Ovary (tissue), 10 donors: ENCODE measurements at regions of chr4 and their contacts with region 1.

Region 1: GRCh38 chr4:147096667-147097604 is 151.3 kb upstream of the TTC29 start:
- DNase-seq: no peak
- H3K4me3 ChIP-seq: no peak overlapping the region
- H3K27ac ChIP-seq: no peak overlapping the region
- H3K4me1 ChIP-seq: peaks cover 2% of the 10 kb centered on the region
- H3K27me3 ChIP-seq: no peaks in the 10 kb centered on the region
- CTCF ChIP-seq: peak; percentile 42 to 66 (median 48)
- EP300 ChIP-seq: no peak
- POLR2A ChIP-seq: no peak

Region 2: DNA sequence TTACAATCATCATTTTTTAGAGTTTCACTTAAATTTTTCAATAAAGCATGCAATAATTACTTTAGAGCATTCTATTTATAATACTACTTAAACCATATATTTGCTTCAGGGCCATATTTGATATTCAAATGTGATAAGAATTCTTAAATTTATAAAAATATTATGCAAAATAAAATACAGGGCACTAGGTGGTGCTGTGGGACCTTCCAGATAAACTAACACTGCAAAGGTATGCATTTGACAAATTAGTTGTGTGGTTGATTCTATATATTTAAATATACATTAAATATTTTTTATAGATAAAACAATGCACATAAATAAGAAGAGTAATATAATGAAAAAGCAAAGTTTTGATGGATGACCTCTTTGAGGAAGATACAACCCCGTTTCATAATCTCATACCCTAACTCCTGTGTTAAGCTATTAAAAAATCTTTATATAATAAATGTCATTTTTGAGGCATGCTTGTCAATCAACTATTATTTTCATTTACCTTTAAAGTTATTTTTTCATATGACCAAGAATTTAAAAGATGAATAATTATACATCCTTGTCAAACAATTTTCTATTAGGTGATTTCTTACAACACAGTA is 754.2 kb before region 1 on chr4:
- intact Hi-C with region 1: loop called in 1 of 4 experiments (anchors 10 kb)
- DNase-seq: peak in 1 of 5 donors; percentile 14
- H3K4me3 ChIP-seq: no peak overlapping the region
- H3K27ac ChIP-seq: no peak overlapping the region
- H3K4me1 ChIP-seq: no peaks in the 10 kb centered on the region
- H3K27me3 ChIP-seq: no peaks in the 10 kb centered on the region
- CTCF ChIP-seq: peak in 1 of 3 donors; percentile 15
- EP300 ChIP-seq: no peak
- POLR2A ChIP-seq: no peak

Region 3: GRCh38 chr4:147019061-147019460 is 77.9 kb before region 1 on chr4:
- intact Hi-C with region 1: loop called in 1 of 4 experiments (anchors 10 kb)
- DNase-seq: peak in 3 of 5 donors; percentile 19 to 49 (median 40)
- H3K4me3 ChIP-seq: no peak overlapping the region
- H3K27ac ChIP-seq: no peak overlapping the region
- H3K4me1 ChIP-seq: no peaks in the 10 kb centered on the region
- H3K27me3 ChIP-seq: no peaks in the 10 kb centered on the region
- CTCF ChIP-seq: no peak
- EP300 ChIP-seq: no peak
- POLR2A ChIP-seq: no peak